Activated CD4-positive, alpha-beta T cell treated with anti-CD3 and anti-CD28 coated beads, Interleukin-2, amount 10 ng/mL, durations not matched to agents 24 days and 14 days (primary cell): ENCODE measurements at regions of chr10 and their contacts with region 1.

Region 1: DNA sequence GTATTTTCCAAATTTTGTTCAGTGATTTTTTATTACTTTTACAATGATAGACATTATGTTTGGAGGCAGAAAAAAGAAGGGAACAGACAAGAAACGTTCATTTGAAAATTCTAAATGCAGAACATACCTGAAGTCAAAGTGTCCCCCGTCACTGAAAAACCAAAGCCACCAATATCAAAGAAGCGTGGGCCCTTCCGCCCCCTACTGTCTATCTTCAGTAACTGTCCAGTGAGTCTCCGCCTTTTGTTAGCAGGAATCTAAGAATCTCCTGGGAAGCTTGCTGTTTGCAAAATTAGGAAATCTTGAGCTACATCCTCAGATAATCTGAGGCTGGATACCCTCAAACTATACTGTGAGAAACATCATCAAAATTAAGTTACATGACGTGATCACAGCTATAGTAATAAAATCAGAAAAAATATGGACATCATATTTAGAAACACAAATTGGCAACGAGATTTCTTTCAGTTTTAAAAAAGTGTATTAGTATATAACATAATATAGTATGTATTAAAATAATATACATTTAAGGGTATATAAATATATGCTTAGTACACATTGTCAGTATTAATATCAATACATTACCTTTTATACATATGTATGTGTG is 169.3 kb upstream of the AKR1E2 start:
- DNase-seq: peak; percentile 84
- H3K4me3 Mint-ChIP-seq: no peak overlapping the region
- H3K27ac Mint-ChIP-seq: no peak overlapping the region
- H3K4me1 Mint-ChIP-seq: peaks cover 10% of the 10 kb centered on the region
- H3K27me3 Mint-ChIP-seq: peaks cover 18% of the 10 kb centered on the region

Region 2: DNA sequence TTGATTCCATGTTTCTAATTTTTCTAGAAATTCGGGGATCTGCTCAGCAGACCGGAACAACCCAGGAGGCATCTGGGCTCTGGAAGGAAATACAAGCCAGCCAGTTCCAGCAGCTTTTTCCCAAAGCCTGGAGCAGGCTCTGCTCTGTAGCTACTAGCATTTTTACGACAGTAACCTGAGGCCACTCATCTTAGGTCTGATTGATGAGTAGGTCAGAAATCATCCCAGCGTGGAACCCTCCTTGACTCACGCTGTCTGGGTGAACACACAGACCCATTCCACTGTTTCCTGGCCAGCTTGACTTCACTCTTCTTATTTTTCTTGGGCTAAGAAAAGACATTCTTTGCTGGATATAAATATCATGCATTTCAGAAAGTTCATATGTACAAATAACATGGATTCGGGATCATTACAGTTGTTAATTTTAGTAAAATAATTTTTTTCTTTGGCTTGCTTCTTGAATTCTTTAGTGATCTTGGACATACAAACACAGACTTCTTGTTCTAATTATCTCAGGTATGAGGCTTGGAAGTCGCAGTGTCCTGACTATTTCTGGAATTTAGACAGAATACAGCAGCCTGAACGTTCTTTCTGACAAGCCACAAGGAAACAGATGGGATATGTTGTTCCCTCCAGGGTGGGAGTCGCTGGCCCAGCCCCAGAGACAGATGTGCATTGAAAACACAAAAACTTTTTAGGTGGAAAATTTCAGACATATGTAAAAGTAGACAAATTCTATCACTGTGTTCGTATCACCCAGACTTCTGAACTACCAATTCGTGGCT is 1429.5 kb before region 1 on chr10:
- intact Hi-C with region 1: loop called (anchors 5 kb)
- DNase-seq: no peak
- H3K4me3 Mint-ChIP-seq: peak overlapping the region; percentile 51
- H3K27ac Mint-ChIP-seq: no peak overlapping the region
- H3K4me1 Mint-ChIP-seq: peaks cover 17% of the 10 kb centered on the region
- H3K27me3 Mint-ChIP-seq: peaks cover 22% of the 10 kb centered on the region

Region 3: GRCh38 chr10:3757638-3758490 is 898.8 kb before region 1 on chr10:
- intact Hi-C with region 1: loop called (anchors 1 kb)
- DNase-seq: peak; percentile 90
- H3K4me3 Mint-ChIP-seq: peak overlapping the region; percentile 82
- H3K27ac Mint-ChIP-seq: peak overlapping the region; percentile 100
- H3K4me1 Mint-ChIP-seq: peaks cover 71% of the 10 kb centered on the region
- H3K27me3 Mint-ChIP-seq: no peaks in the 10 kb centered on the region

Region 4: DNA sequence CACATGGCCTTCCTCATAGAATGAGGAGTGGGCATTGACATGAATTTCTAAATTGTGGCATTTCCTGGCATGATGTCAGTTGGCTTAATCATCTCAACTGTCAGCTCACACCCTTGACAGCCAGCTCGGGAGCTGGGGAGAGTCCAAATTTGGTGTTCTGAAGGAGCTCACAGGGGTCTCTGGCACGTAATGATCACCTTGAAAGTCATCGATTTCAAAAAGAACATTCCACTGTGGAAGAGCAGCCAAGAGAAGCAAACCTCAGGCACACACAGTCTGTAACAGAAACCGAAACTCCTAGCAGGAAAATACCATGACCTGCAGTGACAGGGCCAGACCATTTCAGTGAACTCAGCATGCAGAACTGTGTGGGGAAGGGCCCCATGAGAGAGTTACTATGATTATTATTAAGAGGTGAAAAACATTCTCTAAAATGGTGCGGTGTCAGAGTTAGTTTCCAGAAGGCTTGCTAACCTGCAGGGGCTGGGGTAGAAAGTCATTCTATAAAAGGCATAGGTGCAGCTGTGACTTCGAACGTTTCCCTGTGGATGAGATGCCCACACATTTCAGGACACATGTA is 845.3 kb before region 1 on chr10:
- intact Hi-C with region 1: loop called (anchors 1 kb)
- DNase-seq: peak; percentile 90
- H3K4me3 Mint-ChIP-seq: peak overlapping the region; percentile 68
- H3K27ac Mint-ChIP-seq: no peak overlapping the region
- H3K4me1 Mint-ChIP-seq: peaks cover 71% of the 10 kb centered on the region
- H3K27me3 Mint-ChIP-seq: no peaks in the 10 kb centered on the region

Region 5: GRCh38 chr10:3972460-3973301 is 684.0 kb before region 1 on chr10:
- intact Hi-C with region 1: loop called (anchors 10 kb)
- DNase-seq: peak; percentile 87
- H3K4me3 Mint-ChIP-seq: peak overlapping the region; percentile 88
- H3K27ac Mint-ChIP-seq: peak overlapping the region; percentile 99
- H3K4me1 Mint-ChIP-seq: peaks cover 41% of the 10 kb centered on the region
- H3K27me3 Mint-ChIP-seq: no peaks in the 10 kb centered on the region

Region 6: DNA sequence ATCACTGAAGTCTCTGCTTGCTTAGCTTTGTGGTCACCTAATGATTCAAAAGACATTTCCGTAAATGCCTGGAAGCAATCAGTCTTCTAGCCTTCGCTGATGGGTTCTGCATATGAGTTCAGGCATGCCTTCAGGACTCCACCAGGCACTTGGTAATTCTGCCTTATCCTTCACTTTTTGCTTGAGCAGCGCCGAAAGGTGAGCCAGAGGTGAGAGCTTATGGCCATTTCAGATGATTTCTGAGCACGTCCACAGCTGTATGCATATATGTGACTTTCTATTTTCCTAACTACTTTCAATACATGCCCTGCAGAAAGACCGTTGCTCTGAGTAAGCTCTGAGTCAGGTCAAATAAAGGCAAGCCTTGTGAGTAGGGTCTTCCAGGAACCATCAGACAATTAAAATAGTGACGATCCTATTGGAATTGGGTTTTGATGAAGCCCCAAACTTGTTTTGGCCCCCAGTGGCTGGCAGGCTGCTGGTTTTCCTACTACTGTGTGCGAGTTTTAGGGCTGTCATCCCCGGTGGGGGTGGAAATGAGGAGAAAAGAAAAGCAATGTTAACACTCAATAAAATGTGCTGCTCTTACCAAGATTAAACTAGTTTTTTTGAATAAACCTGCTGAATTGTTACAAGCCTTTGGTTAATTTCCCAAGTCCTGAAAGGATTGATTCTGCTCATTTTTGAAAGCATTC is 14.9 kb after region 1 on chr10:
- intact Hi-C with region 1: no loop called
- DNase-seq: no peak
- H3K4me3 Mint-ChIP-seq: no peak overlapping the region
- H3K27ac Mint-ChIP-seq: no peak overlapping the region
- H3K4me1 Mint-ChIP-seq: no peaks in the 10 kb centered on the region
- H3K27me3 Mint-ChIP-seq: peaks cover 44% of the 10 kb centered on the region